Activated CD4-positive, alpha-beta T cell treated with anti-CD3 and anti-CD28 coated beads, Interleukin-2, amount 10 ng/mL, durations not matched to agents 24 days and 14 days (primary cell): ENCODE measurements at regions of chrX and their contacts with region 1.

Region 1: DNA sequence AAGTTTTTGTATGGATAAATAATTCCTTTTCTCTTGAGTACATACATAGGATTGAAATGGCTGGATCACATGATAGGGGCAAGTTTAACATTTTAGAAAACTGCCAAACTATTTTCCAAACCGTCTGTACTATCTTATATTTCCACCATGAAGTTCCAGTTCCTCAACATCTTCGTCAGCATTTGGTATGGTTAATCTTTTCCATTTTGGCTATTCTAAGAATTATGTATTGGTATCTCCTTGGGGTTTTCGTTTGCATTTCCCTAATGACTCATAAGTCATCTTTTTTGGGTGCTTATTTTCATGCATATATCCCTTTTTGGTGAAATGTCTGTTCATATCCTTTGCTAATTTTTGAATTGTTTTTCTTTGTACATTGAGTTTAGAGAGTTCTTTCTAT is 227.7 kb downstream of the DLG3 start:
- DNase-seq: no peak
- H3K4me3 Mint-ChIP-seq: no peak overlapping the region
- H3K27ac Mint-ChIP-seq: peak overlapping the region; percentile 90
- H3K4me1 Mint-ChIP-seq: peaks cover 13% of the 10 kb centered on the region
- H3K27me3 Mint-ChIP-seq: no peaks in the 10 kb centered on the region

Region 2: DNA sequence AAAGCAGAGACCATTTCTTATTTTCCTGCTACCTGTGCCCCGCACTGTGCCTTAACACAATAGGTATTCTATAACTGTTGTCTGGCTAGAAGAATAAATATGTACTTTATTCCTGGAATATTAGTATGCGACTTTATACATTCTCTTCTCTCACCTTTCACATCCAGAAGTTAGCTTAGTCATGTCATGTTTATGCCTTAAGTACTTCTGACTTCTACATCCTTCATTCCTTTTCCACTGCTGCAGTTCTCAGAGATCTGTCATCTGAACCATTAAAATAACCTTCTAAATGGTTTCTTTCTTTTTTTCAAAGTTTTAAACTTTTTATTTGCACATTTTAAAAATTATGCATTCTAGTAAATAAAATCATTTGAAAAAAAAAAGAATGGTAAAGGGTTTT is 348.0 kb before region 1 on chrX:
- intact Hi-C with region 1: no loop called
- DNase-seq: no peak
- H3K4me3 Mint-ChIP-seq: no peak overlapping the region
- H3K27ac Mint-ChIP-seq: no peak overlapping the region
- H3K4me1 Mint-ChIP-seq: no peaks in the 10 kb centered on the region
- H3K27me3 Mint-ChIP-seq: no peaks in the 10 kb centered on the region

Region 3: DNA sequence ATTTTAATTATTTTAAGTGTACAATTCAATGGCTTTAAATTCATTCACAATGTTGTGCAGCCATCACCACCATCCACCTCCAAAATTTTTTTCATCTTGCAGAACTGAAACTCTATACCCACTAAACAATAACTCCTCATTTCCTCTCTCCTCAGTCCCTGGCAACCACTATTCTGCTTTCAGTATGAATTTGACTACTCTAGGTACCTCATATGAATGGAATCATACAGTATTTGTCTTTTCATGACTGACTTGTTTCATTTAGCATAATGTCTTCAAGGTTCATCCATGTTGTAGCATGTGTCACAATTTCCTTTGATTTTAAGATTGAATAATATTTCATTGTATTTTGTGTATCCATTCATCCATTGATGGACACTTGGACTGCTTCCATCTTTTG is 335.6 kb before region 1 on chrX:
- intact Hi-C with region 1: loop called (anchors 2 kb)
- DNase-seq: peak; percentile 58
- H3K4me3 Mint-ChIP-seq: no peak overlapping the region
- H3K27ac Mint-ChIP-seq: peak overlapping the region; percentile 45
- H3K4me1 Mint-ChIP-seq: peaks cover 15% of the 10 kb centered on the region
- H3K27me3 Mint-ChIP-seq: no peaks in the 10 kb centered on the region

Region 4: DNA sequence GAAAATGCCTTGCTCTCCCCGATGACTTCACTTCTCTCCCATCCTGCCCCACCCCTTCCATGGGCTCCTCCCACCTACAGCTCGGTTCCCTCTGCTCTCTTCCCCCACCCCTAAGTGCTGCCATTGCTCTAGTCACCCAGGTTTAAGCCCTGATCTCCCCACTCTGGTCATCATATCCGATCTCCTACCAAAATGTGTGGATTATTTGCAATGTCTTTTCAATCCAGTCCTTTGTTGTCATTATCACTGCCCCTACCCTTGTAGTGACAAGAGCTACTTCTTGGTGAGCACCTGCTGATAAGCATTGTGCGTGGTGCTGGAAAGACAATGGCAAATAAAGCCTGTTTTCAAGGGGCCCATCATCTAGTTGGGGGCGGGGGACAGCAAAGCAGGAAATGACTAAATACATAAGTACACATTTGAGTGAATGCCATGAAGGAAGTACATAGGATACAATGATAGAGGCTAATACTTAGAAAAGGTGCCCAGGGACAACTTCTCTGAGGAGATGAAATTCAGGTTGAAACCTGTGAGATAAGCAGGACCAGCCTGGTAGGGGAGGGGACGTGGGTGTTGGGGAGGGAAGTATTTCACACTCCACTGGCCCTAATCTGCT is 163.9 kb before region 1 on chrX:
- intact Hi-C with region 1: loop called (anchors 5 kb)
- DNase-seq: peak; percentile 57
- H3K4me3 Mint-ChIP-seq: peak overlapping the region; percentile 72
- H3K27ac Mint-ChIP-seq: peak overlapping the region; percentile 85
- H3K4me1 Mint-ChIP-seq: peaks cover 35% of the 10 kb centered on the region
- H3K27me3 Mint-ChIP-seq: no peaks in the 10 kb centered on the region

Region 5: GRCh38 chrX:70592091-70592490 is 80.2 kb before region 1 on chrX:
- intact Hi-C with region 1: loop called (anchors 1 kb)
- DNase-seq: peak; percentile 73
- H3K4me3 Mint-ChIP-seq: no peak overlapping the region
- H3K27ac Mint-ChIP-seq: peak overlapping the region; percentile 85
- H3K4me1 Mint-ChIP-seq: peaks cover 13% of the 10 kb centered on the region
- H3K27me3 Mint-ChIP-seq: no peaks in the 10 kb centered on the region

Region 6: GRCh38 chrX:70605352-70605751 is 67.0 kb before region 1 on chrX:
- intact Hi-C with region 1: no loop called
- DNase-seq: no peak
- H3K4me3 Mint-ChIP-seq: no peak overlapping the region
- H3K27ac Mint-ChIP-seq: no peak overlapping the region
- H3K4me1 Mint-ChIP-seq: peaks cover 6% of the 10 kb centered on the region
- H3K27me3 Mint-ChIP-seq: peaks cover 6% of the 10 kb centered on the region

Region 7: GRCh38 chrX:70755850-70756249 is 83.5 kb after region 1 on chrX:
- intact Hi-C with region 1: loop called (anchors 2 kb)
- DNase-seq: peak; percentile 85
- H3K4me3 Mint-ChIP-seq: peak overlapping the region; percentile 21
- H3K27ac Mint-ChIP-seq: peak overlapping the region; percentile 34
- H3K4me1 Mint-ChIP-seq: peaks cover 20% of the 10 kb centered on the region
- H3K27me3 Mint-ChIP-seq: no peaks in the 10 kb centered on the region

Region 8: GRCh38 chrX:70908541-70908940 is 236.2 kb after region 1 on chrX and contains the start of gene TEX11:
- intact Hi-C with region 1: no loop called
- DNase-seq: peak; percentile 23
- H3K4me3 Mint-ChIP-seq: no peak within 1 kb of the TSS
- H3K27ac Mint-ChIP-seq: no peak within 1 kb of the TSS
- H3K4me1 Mint-ChIP-seq: no peaks in the 10 kb centered on the region
- H3K27me3 Mint-ChIP-seq: no peaks in the 10 kb centered on the region
- total RNA-seq, gene TEX11: not detected in 2 replicates